Caco-2 (cell line): ENCODE measurements at regions of chr11 and their contacts with region 1.

Region 1: DNA sequence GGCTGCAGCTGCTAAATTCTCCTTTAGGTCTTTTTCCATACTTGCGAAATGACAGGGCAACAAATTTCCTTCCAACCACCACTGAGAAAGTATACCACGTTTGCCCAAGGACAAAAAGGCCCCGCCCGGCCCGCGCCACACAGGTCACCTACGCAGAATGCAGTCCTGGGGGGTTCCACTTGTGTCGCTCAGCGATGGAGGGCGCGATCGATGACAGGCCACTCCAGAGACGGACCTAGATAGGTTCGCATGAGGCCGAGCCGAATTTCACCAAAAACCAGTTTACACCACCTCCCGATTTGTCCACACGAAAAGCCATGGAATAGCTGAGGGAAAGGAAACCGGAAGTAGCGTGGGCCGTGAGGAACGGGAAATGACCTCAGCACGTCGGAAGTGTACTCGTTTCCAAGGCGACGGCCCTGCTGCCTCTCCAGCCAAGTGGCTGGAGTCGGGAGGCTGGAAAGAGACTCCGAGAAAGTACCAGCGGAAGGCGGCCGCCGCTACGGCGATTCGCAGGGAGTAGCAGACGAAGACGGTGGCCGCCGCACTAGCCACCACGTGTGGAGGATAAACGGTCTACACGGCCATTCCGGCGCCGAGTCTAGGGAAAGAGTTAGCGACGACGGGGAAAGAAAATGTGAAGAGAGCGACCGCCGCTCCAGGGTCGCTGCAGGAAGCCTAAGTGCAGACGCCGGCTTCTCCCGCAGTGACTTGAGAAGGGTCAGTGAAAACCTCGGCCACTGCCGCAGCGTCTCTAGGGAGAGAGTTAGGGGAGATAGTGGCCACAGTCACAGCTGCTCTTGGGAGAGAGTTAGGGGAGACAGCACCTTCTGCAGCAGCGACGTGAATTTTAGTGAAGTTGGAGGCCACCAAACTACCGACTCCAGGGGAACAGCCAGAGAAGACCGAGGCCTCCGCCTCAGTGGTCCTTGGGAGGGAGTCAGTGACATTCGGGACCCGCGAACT is at the start of gene ANKRD42:
- DNase-seq: peak; percentile 96 to 97
- H3K4me3 ChIP-seq: peak within 1 kb of the TSS; percentile 77
- H3K4me3 Mint-ChIP-seq: peak within 1 kb of the TSS; percentile 80
- H3K27ac Mint-ChIP-seq: peak within 1 kb of the TSS; percentile 89
- H3K4me1 ChIP-seq: peaks cover 7% of the 10 kb centered on the region; the same call in 1 of the 2 replicates
- H3K4me1 Mint-ChIP-seq: peaks cover 30% of the 10 kb centered on the region
- H3K27me3 ChIP-seq: no peaks in the 10 kb centered on the region
- H3K27me3 Mint-ChIP-seq: no peaks in the 10 kb centered on the region
- CTCF ChIP-seq: peak in 1 of 2 experiments; percentile 4
- total RNA-seq, gene ANKRD42: 8.3 and 9.0 TPM in 2 replicates

Region 2: DNA sequence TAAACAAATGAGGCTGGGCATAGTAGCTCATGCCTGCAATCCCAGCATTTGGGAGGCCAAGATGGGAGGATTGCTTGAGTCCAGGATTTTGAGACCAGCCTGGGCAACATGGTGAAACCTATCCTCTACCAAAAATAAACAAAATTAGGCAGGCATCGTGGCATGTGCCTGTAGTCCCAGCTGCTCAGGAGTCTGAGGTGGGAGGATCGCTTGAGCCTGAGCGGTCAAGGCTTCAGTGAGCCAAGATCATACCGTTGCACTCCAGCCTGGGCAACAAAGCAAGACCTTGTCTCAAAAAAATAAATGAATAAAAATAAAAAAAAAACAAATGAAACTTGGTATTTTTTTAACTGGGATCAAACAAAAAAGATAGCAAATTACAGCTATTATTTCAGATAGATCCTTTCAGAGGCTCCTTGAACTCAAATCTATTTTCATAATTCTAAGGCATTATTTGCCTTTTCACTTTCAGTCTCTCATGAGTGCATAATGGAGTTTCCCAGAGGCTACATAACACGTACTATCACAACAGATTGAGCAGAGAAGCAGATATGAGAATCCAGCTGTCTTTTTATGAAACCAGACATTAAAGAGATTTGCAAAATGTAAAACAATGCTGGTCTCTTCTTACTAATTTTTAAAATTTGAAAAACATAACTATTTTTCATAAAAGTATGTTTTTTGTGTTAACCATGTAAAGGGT is 268.9 kb before region 1 on chr11:
- CTCF ChIA-PET with region 1: no interaction called
- POLR2A ChIA-PET with region 1: no interaction called
- intact Hi-C with region 1: no loop called
- DNase-seq: no peak
- H3K4me3 ChIP-seq: no peak overlapping the region
- H3K4me3 Mint-ChIP-seq: no peak overlapping the region
- H3K27ac Mint-ChIP-seq: no peak overlapping the region
- H3K4me1 ChIP-seq: peaks cover 12% of the 10 kb centered on the region
- H3K4me1 Mint-ChIP-seq: peaks cover 34% of the 10 kb centered on the region
- H3K27me3 ChIP-seq: no peaks in the 10 kb centered on the region
- H3K27me3 Mint-ChIP-seq: no peaks in the 10 kb centered on the region
- CTCF ChIP-seq: no peak

Region 3: DNA sequence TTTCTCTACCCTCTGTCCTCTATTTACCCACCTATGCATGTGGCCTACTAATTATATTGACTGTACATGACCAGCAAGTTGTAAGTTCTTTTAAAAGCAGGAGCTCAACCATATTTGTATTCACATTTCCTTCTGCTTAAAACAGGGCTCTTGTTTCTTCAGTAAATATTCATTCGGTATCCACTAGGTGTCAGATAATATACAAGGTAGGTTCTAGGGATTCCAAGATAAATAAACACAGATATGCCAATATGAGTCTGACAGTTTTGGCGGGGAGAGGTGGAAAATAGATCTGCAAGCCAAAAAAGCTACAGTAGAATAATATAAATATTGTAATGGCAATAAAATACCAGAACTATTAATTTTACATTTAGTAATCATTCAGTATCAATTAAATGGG is 106.6 kb before region 1 on chr11:
- CTCF ChIA-PET with region 1: interaction called, 4 read pairs
- POLR2A ChIA-PET with region 1: no interaction called
- intact Hi-C with region 1: loop called (anchors 1 kb)
- DNase-seq: peak in 1 of 2 experiments; percentile 28
- H3K4me3 ChIP-seq: no peak overlapping the region
- H3K4me3 Mint-ChIP-seq: no peak overlapping the region
- H3K27ac Mint-ChIP-seq: no peak overlapping the region
- H3K4me1 ChIP-seq: peaks cover 13% of the 10 kb centered on the region
- H3K4me1 Mint-ChIP-seq: peaks cover 48% of the 10 kb centered on the region
- H3K27me3 ChIP-seq: no peaks in the 10 kb centered on the region
- H3K27me3 Mint-ChIP-seq: no peaks in the 10 kb centered on the region
- CTCF ChIP-seq: peak; percentile 51 to 61